ENCODE measurements at regions of chr9 and their contacts with region 1.

Region 1: DNA sequence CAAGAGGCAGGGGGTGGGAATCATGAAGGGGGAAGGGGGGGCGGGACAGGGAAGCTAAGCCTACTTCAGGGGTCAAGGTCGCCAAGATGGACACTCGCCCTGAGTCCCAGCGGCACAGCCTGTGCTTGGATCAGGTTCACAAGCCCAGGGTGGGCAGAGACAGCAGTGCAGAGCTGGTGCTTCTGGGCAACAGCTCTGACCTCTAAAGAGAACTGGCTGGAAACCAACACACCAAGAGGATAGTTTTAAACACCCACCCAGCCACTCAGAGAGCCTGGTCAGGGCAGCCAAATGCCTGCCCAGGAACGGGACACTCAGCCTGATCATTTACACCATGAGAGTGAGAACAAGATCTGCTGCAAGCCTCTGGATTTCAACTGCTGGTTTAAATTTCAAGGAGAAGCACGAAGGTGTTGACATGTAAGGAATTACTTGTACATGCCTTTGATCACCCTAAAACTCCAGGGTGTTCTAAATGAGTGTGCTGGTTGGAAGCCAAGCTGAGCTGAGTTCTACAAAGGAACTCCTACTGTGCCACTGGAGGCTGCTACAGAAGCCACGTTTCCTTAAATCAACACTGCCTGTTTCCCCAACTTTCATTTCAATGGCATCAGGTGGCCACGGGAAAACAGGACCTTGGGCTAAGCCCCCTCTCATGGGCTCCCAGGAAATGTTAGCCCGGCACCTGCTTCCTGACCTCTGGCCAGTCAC is 91.5 kb downstream of the TTLL11 start:
- DNase-seq: no peak

Region 2: GRCh38 chr9:122065923-122066629 is 64.4 kb after region 1 on chr9:
- intact Hi-C with region 1: loop called (anchors 5 kb)
- DNase-seq: no peak

Region 3: GRCh38 chr9:122213589-122214413 is 212.2 kb after region 1 on chr9:
- intact Hi-C with region 1: no loop called
- DNase-seq: peak; percentile 74